Common myeloid progenitor, CD34-positive (primary cell): ENCODE measurements at regions of chr12 and their contacts with region 1.

Region 1: DNA sequence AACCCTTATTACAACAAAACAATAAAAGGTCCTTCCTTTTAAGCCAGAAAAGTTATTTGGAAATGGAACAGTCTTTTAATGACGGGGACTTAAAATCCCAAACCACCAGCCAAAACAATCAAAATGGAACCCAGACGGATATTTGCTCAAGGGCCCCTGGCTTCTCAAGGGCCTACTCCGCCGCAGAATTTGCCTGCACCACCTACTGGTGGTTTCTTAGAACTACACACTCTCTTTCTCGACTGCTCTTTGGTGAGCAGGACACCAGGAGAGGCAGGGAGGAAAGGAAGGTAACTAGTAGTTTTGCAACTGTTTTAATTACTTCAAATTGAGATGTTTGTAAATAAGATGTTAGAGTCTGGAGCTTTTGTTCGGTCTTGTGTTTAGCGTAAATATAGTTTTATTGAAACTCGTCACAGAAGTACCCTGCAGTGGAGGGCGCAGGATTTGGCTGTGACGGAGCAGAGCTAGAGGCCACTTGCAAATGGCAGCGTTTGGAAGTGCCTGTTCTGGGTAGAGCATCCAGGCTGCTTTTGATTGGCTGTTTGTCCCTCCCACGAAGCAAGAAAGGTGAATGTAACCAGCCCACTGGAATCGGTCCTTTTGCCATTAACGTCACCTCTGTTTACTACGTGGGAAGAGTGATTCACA is 238.5 kb downstream of the CACNA1C start:
- DNase-seq: peak; percentile 57 to 74 (median 69)
- H3K4me3 ChIP-seq: no peak overlapping the region
- H3K27ac ChIP-seq: no peak overlapping the region
- H3K4me1 ChIP-seq: peaks cover 7 to 84% (median 37%) of the 10 kb centered on the region in 4 experiments
- H3K27me3 ChIP-seq: no peaks in the 10 kb centered on the region

Region 2: GRCh38 chr12:2057041-2057794 is 234.1 kb before region 1 on chr12:
- CTCF ChIA-PET with region 1: interaction called, 35 read pairs
- POLR2A ChIA-PET with region 1: no interaction called
- DNase-seq: peak; percentile 81 to 90 (median 86)
- H3K4me3 ChIP-seq: no peak overlapping the region
- H3K27ac ChIP-seq: no peak overlapping the region
- H3K4me1 ChIP-seq: peaks cover 0 to 16% (median 14%) of the 10 kb centered on the region in 4 experiments
- H3K27me3 ChIP-seq: peaks cover 13 to 35% (median 23%) of the 10 kb centered on the region in 5 experiments

Region 3: DNA sequence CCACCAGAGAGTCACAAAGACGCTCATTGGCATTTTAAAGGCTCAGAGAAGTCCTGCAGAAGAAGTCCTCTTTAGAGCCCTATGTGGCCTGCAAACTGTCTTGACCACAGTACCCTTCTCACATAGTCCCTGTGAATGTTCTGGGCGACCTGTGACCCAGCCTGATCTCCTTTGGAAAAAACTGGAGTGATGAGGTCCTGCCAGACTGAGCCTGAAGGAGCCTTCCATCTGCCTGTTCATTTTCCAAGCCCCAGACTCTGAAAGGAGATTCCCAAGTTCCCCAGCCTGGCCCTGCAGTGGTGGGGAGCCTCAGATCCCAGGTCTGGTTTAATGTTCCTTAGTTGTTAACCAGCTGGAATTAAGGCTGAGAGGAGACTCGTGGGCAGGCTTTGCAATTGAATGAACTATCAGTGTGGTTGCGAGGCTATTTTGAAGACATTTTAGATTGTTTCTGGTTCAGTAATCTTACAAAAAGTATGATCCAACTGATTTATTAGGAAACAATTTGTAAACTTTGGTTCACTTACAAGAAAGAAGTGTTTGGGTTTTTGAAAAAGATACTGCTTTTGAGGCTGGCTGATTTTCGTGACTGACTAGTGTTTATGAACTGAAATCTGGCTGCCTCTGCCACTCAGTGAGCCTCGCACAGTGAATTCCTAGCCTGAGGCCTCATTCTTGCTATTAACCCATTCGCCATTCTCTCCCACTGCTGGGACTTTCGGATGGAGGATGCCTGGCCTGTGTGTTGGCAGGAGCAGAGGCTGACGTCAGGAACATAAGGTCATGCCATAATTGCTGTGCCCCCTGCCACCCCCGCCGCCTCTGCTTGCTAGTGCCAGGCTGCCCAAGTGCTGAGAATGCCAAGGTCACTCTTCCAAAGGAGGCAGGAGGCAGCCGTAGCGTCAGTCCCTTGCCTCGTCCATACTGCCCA is 10.5 kb after region 1 on chr12:
- CTCF ChIA-PET with region 1: interaction called, 25 read pairs
- POLR2A ChIA-PET with region 1: interaction called, 3 read pairs
- DNase-seq: no peak
- H3K4me3 ChIP-seq: no peak overlapping the region
- H3K27ac ChIP-seq: no peak overlapping the region
- H3K4me1 ChIP-seq: peaks cover 3 to 63% (median 39%) of the 10 kb centered on the region in 4 experiments
- H3K27me3 ChIP-seq: no peaks in the 10 kb centered on the region

Region 4: DNA sequence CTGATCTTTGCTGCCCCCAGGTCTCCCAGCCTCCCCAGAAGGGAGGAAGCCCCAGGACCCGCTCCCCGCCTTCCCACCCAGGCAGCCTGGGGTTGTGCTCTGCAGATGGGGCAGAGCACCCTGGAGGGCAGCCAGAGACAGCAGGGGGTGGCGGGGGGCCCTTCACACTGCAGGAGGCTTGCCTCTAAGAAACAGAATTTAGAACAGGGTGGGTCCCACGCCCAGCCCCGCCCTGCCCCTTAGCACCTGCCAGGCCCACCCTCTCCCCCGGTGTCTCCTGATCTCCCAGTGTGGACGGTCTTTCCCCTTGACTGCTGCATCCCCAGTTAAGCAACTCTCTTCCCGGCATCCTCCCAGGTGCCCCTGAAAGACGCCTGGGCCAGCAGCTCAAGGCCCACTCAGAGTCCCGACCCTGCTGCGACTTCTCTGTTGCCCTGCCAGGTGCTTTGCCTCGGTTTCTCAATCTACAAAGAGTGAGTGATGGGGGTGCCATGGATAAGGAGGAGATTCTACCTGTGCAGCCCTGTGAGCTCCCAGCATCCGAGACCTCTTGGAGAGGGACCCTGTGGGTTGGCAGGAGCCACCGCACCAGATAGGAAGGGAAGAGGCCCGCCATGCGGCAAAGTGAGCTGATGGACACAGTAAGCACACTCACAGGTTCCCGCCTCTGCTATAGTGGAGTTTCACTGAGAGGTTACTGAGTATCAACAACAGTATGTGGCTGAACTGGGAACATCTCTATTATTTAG is 176.3 kb after region 1 on chr12:
- CTCF ChIA-PET with region 1: no interaction called
- POLR2A ChIA-PET with region 1: no interaction called
- DNase-seq: no peak
- H3K4me3 ChIP-seq: no peak overlapping the region
- H3K27ac ChIP-seq: no peak overlapping the region
- H3K4me1 ChIP-seq: no peaks in the 10 kb centered on the region
- H3K27me3 ChIP-seq: no peaks in the 10 kb centered on the region